Right cardiac atrium (tissue), 5 donors: ENCODE measurements at regions of chr12 and their contacts with region 1.

Region 1: DNA sequence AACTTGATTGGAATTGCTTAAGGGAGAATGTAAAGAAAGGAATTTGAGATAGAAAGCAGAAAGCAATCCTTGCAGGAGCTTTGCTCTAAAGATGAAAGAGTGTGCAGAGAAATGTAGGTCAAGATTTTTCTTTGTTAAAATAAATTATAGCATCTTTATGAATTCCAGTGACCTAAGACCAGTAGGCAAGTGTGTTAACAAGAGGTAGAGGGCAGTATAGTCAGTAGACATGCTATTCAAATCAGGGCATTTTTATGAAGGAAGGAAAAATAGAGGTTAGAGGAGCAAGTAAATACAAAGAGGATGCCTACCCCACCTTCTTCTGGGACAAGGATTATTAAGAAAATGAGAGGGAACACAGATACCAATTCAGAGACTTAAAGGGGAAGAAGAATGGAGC is 148.5 kb downstream of the PLCZ1 start:
- DNase-seq: no peak
- ATAC-seq: no peak
- H3K4me3 ChIP-seq: no peak overlapping the region
- H3K27ac ChIP-seq: no peak overlapping the region
- H3K4me1 ChIP-seq: no peaks in the 10 kb centered on the region
- H3K27me3 ChIP-seq: no peaks in the 10 kb centered on the region

Region 2: GRCh38 chr12:18130851-18131250 is 458.5 kb before region 1 on chr12:
- intact Hi-C with region 1: no loop called
- DNase-seq: no peak
- ATAC-seq: no peak
- H3K4me3 ChIP-seq: no peak overlapping the region
- H3K27ac ChIP-seq: no peak overlapping the region
- H3K4me1 ChIP-seq: no peaks in the 10 kb centered on the region
- H3K27me3 ChIP-seq: no peaks in the 10 kb centered on the region

Region 3: GRCh38 chr12:18400186-18400585 is 189.1 kb before region 1 on chr12:
- intact Hi-C with region 1: no loop called
- DNase-seq: no peak
- ATAC-seq: no peak
- H3K4me3 ChIP-seq: no peak overlapping the region
- H3K27ac ChIP-seq: no peak overlapping the region
- H3K4me1 ChIP-seq: peaks cover 1% of the 10 kb centered on the region
- H3K27me3 ChIP-seq: no peaks in the 10 kb centered on the region

Region 4: GRCh38 chr12:18462442-18462841 is 126.9 kb before region 1 on chr12:
- intact Hi-C with region 1: no loop called
- DNase-seq: no peak
- ATAC-seq: no peak
- H3K4me3 ChIP-seq: no peak overlapping the region
- H3K27ac ChIP-seq: no peak overlapping the region
- H3K4me1 ChIP-seq: no peaks in the 10 kb centered on the region
- H3K27me3 ChIP-seq: no peaks in the 10 kb centered on the region

Region 5: DNA sequence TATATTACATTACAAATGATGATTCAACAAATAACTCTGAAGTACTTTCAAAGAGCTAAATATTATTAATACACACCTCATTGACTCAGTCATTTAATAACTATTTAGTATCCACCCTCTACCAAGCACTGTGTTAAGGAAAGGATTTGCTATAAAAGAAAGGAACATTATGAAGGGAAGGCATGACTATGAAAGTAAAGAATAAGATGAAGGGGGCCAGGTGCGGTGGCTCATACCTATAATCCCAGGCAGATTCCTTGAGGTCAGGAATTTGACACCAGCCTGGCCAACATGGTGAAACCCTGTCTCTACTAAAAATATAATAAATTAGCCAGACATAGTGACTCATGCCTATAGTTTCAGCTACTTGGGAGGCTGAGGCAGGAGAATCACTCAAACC is 40.6 kb after region 1 on chr12:
- intact Hi-C with region 1: loop called in 1 of 4 experiments (anchors 10 kb)
- DNase-seq: no peak
- ATAC-seq: no peak
- H3K4me3 ChIP-seq: no peak overlapping the region
- H3K27ac ChIP-seq: no peak overlapping the region
- H3K4me1 ChIP-seq: no peaks in the 10 kb centered on the region
- H3K27me3 ChIP-seq: no peaks in the 10 kb centered on the region

Region 6: DNA sequence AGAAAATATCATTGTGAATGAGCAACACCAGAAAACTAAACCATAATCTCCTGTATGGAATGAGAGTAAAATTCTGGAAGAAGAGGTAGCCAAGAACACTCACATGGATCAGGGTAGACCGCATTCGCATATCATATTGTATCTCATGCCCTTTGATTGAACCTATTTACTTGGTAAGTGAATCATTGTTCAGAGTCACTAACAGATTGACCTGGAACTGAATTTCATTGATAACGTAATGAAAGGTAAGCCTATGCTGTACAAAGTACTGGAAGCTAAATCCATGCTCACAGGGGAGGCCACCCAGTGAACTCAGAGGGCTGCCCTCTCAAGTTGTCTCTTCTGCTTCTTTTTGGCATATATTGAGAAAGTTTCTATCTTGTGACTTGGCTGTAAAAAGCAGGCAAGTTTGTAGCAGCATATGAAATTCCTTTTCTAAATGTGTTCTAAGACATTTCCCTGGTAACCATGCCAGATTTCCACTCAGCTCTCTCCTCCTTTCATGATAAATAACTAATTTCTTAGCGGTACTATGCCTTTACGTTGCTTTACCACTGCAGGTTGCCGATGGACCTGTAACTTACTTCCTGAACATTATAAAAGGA is 57.1 kb after region 1 on chr12:
- intact Hi-C with region 1: no loop called
- DNase-seq: no peak
- ATAC-seq: no peak
- H3K4me3 ChIP-seq: no peak overlapping the region
- H3K27ac ChIP-seq: no peak overlapping the region
- H3K4me1 ChIP-seq: no peaks in the 10 kb centered on the region
- H3K27me3 ChIP-seq: no peaks in the 10 kb centered on the region